ENCODE measurements at regions of chrX and their contacts with region 1.

Region 1: DNA sequence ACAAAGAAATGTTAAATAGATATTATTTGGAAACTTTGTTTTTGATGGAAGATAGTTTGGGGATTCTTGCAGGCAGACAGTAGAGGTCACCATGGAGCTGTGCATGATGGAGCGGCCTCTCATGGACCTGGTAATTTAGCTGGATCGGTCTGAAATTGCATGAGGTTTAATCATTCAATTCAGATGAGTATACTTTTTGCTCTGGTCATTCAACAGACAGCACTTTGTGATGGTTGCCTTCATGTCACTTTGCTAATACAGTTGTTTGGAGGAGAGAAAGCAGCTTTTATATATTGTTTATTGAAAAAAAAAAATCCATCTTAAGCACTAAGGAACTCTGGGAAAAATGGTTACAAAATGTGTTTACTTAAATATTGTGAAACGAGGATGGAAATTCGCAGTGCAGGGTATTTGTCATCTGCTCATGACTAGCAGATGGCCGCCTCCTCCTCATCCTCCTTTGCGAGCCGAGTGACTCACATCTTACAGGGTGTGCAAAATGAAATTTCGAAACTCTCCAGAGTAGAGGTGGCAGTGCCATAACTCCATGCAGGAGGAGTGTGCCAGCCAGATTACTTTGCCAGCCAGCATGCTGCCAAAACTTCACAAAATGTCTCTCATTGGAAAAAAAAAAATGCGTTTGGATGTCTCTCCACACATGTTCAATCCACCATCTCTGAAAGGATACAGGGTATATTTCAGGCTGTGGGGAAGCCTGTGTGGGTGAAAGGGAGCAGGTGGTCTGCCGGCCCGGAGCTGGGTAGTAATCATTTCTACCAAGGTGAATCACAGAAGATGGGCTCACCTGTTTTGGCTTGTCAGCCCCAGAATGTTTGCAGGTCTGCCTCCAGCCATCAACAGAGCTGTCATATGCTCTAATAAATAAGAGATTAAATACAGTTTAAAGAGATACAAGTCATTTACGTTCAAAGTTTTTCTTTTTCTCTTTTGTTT is 314.9 kb upstream of the DIPK2B start:
- DNase-seq: peak; percentile 15 to 30
- ATAC-seq: peak; percentile 59 to 94 (median 77)
- H3K4me3 ChIP-seq: no peak overlapping the region
- H3K27ac ChIP-seq: no peak overlapping the region
- H3K4me1 ChIP-seq: peaks cover 0 to 11% (median 0%) of the 10 kb centered on the region in 9 donors
- H3K27me3 ChIP-seq: peaks cover 0 to 41% (median 0%) of the 10 kb centered on the region in 7 donors
- CTCF ChIP-seq: peak; percentile 19 to 76 (median 61)

Region 2: GRCh38 chrX:45632506-45632905 is 117.0 kb after region 1 on chrX:
- intact Hi-C with region 1: no loop called
- DNase-seq: no peak
- ATAC-seq: no peak
- H3K4me3 ChIP-seq: no peak overlapping the region
- H3K27ac ChIP-seq: no peak overlapping the region
- H3K4me1 ChIP-seq: no peaks in the 10 kb centered on the region
- H3K27me3 ChIP-seq: peaks cover 0 to 46% (median 0%) of the 10 kb centered on the region in 7 donors
- CTCF ChIP-seq: no peak

Region 3: DNA sequence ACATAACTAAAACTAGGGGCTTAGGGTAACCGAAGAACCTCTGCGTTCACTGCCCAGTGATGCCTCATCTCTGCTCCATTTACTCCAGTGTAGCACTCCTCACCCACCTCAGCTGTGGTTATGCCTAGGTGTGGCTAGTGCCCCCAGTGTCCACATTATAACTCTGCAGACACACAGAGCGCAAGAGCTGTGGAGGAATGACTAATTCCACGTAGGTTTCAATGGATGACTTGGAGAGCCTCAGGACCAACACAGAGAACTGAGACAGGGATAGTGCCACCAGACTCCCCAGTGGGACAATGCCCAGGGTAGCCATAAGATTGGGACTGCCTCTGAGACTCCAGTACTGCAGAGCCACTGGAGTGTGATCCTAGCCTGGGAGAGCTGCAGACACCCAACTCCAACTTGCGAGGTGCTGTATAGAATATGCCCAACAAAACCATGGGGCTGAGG is 227.6 kb after region 1 on chrX:
- intact Hi-C with region 1: loop called in 5 of 10 experiments (anchors 5 to 10 kb)
- DNase-seq: no peak
- ATAC-seq: no peak
- H3K4me3 ChIP-seq: no peak overlapping the region
- H3K27ac ChIP-seq: no peak overlapping the region
- H3K4me1 ChIP-seq: peaks cover 0 to 5% (median 0%) of the 10 kb centered on the region in 9 donors
- H3K27me3 ChIP-seq: peaks cover 0 to 55% (median 0%) of the 10 kb centered on the region in 7 donors
- CTCF ChIP-seq: no peak

Region 4: GRCh38 chrX:45769761-45770582 is 254.4 kb after region 1 on chrX:
- intact Hi-C with region 1: loop called in 1 of 10 experiments (anchors 10 kb)
- DNase-seq: peak; percentile 43 to 69
- ATAC-seq: peak; percentile 91 to 95 (median 93)
- H3K4me3 ChIP-seq: peak overlapping the region in 9 of 10 donors; percentile 31 to 58 (median 50)
- H3K27ac ChIP-seq: peak overlapping the region in 9 of 10 donors; percentile 29 to 82 (median 74)
- H3K4me1 ChIP-seq: peaks cover 0 to 29% (median 0%) of the 10 kb centered on the region in 9 donors
- H3K27me3 ChIP-seq: peaks cover 0 to 69% (median 0%) of the 10 kb centered on the region in 7 donors
- CTCF ChIP-seq: no peak

Region 5: GRCh38 chrX:45843518-45843917 is 328.0 kb after region 1 on chrX:
- intact Hi-C with region 1: loop called in 5 of 10 experiments (anchors 5 to 10 kb)
- DNase-seq: no peak
- ATAC-seq: no peak
- H3K4me3 ChIP-seq: no peak overlapping the region
- H3K27ac ChIP-seq: no peak overlapping the region
- H3K4me1 ChIP-seq: no peaks in the 10 kb centered on the region
- H3K27me3 ChIP-seq: peaks cover 0 to 59% (median 0%) of the 10 kb centered on the region in 7 donors
- CTCF ChIP-seq: peak in 6 of 9 donors; percentile 7 to 42 (median 30)

Region 6: DNA sequence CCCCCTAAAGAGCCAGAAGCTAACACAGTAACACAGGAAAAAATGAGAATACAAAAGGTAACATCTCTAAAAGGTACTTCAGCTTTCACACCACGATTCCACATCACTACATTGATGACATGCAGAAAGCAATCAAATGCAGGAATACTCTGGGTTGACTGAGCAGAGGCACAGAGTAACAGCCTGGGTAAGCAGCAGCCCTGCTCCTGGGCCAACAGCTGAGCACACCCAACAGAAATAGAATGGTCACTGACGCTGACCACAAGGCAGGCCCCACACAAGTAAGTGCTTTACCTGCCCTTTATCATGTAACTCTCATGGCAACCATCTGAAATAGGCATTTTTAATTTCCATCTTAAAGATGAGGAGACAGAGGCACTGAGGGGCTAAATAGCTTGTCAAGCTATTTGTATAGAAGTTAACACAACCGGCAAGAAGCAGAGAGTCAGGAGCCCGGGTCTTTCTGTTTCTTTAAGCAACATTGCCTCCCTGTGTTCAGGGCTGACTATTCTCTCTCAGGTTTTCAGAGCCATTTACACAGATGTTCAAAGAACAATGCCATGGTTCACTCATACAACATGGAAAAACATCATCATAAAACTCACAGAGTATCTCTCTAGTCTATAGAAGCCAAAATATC is 860.8 kb after region 1 on chrX:
- intact Hi-C with region 1: loop called in 3 of 10 experiments (anchors 10 kb)
- DNase-seq: no peak
- ATAC-seq: peak in 7 of 8 donors; percentile 38 to 79 (median 68)
- H3K4me3 ChIP-seq: no peak overlapping the region
- H3K27ac ChIP-seq: no peak overlapping the region
- H3K4me1 ChIP-seq: no peaks in the 10 kb centered on the region
- H3K27me3 ChIP-seq: peaks cover 0 to 9% (median 0%) of the 10 kb centered on the region in 7 donors
- CTCF ChIP-seq: peak in 6 of 9 donors; percentile 29 to 47 (median 38)

Measured in heart right ventricle (tissue), 16 donors.